ENCODE measurements at regions of chr4 and their contacts with region 1.

Region 1: DNA sequence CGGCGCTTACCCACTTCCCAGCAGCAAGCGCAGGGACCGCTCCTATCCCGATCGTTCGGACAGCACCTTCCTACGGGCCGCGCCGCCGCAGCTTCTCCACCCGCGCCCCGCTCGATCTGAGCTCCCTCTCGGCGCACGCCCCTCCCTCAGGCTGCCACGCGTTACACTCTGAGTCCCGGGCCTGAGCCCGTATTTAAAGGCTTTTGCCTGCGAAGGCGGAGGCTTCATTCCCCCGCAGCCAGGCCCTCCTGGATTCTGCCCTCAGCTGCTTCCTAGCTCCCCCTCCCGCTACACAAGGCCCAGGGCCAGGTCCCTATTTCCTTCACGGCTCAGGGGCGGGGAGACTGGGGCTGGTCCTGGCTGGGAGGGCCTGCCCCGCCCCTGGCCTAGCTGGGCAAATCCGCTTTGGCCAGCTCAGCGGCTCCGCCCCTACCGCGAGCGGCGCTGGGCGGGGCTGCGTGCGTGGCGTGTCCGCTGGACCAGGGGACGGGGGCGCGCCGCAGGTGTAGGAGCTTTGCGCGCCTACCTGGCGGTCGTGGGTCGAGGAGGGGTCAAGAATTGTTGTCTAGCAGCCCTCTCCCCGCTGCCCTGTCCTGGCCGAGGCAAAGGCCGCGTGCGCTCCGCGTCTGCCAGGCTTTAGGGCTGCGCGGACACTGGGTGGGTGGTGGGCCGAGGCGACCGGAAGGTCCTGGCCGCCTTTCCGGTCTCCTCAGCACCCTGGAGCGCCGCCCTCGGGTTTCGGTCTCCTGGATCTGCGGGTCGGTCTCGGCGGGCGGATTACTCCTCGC is at the start of gene UGDH:
- DNase-seq: peak; percentile 98
- ATAC-seq: peak; percentile 99
- total RNA-seq, gene UGDH: 14.2 TPM

Region 2: GRCh38 chr4:39638354-39639240 is 111.1 kb after region 1 on chr4 and contains the start of gene SMIM14:
- intact Hi-C with region 1: loop called (anchors 5 kb)
- DNase-seq: peak; percentile 99
- ATAC-seq: peak; percentile 98
- total RNA-seq, gene SMIM14: 11.3 TPM